GM13976 (cell line): ENCODE measurements at regions of chrX and their contacts with region 1.

Region 1: DNA sequence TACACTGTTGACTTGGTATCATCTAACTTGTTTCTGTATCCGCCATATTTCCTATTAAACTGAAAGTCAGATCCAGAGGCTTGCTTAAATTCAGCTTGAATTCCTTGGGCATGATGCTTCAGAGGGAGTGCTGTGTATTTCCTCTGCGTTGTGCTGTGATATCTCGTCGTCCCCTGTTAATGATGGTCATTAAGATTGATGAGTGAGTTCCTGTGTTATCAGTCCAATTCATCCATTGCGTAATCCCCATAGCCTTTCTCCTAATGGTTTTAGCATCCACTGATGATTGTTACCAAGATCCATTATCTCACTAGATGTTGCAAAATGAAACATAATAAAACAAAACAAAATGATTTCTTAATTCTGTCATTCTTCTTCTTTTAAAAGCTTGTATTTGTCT is 31.3 kb upstream of the CHM start:
- DNase-seq: no peak
- CTCF ChIP-seq: no peak

Region 2: GRCh38 chrX:85611926-85612325 is 466.7 kb before region 1 on chrX:
- in situ Hi-C with region 1: loop called (anchors 25 kb)
- DNase-seq: peak; percentile 7
- CTCF ChIP-seq: peak; percentile 26

Region 3: GRCh38 chrX:86171366-86171765 is 92.7 kb after region 1 on chrX:
- in situ Hi-C with region 1: no loop called
- DNase-seq: no peak
- CTCF ChIP-seq: peak; percentile 42